ENCODE measurements at regions of chr11 and their contacts with region 1.

Region 1: GRCh38 chr11:75547580-75548058 is 14.4 kb upstream of the SERPINH1 start:
- DNase-seq: peak in 1 of 2 donors; percentile 43
- ATAC-seq: peak; percentile 78 to 91
- H3K4me3 ChIP-seq: no peak overlapping the region
- H3K27ac ChIP-seq: no peak overlapping the region
- H3K4me1 ChIP-seq: no peaks in the 10 kb centered on the region
- H3K27me3 ChIP-seq: no peaks in the 10 kb centered on the region
- CTCF ChIP-seq: peak; percentile 75 to 87 (median 85)
- POLR2A ChIP-seq: no peak

Region 2: GRCh38 chr11:75577207-75577606 is 29.6 kb after region 1 on chr11:
- in situ Hi-C with region 1: loop called in 2 of 4 experiments (anchors 5 kb)
- intact Hi-C with region 1: loop called (anchors 1 kb)
- DNase-seq: no peak
- ATAC-seq: no peak
- H3K4me3 ChIP-seq: no peak overlapping the region
- H3K27ac ChIP-seq: no peak overlapping the region
- H3K4me1 ChIP-seq: peaks cover 10 to 12% of the 10 kb centered on the region in 2 donors
- H3K27me3 ChIP-seq: no peaks in the 10 kb centered on the region
- CTCF ChIP-seq: peak in 4 of 5 experiments; percentile 39 to 76 (median 52)
- POLR2A ChIP-seq: no peak

Region 3: DNA sequence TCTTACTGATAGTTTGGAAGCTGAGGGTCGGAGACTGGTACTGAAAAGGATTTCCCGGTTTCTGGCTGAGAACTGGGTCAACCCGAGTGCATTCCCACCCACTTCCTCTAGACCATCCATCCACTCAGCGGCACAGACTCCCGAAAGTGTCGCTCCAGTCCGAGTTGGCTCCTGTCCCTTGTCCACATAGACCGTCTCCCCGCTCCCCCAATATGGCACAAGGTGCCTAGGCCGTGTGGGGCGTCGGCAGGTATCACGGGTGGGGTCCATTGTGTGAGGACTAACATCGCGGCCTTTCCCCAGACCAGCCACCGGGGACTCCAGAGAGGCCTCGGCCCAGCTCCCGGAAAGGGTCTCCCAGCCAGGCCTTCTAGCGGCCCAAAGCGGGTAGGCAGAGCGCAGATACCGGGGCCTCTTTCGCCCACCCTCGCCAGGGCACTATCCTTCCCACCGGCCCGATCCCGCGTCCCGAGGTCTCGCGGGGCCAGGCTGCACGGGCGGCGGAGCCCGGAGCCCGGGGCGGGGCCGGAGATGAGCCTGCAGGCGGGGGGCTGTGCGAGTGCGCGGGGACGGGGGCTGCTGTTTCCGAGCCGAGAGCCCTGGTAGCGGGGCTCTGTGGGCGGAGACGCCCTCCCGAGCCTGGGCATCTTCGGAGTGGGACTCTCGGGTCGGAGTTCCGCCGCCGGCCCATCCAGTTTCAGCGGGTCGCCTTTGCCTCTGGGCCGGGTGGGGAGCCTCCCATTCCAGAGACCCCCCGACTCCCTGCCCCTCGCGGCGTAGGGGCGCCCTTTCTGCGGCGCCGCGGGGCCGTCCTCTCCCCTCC is 35.5 kb after region 1 on chr11:
- in situ Hi-C with region 1: loop called in 2 of 4 experiments (anchors 5 kb)
- intact Hi-C with region 1: no loop called
- DNase-seq: peak in 1 of 2 donors; percentile 37
- ATAC-seq: peak; percentile 56 to 80
- H3K4me3 ChIP-seq: peak overlapping the region; percentile 60 to 82 (median 75)
- H3K27ac ChIP-seq: peak overlapping the region; percentile 78 to 87 (median 84)
- H3K4me1 ChIP-seq: peaks cover 6 to 13% of the 10 kb centered on the region in 2 donors
- H3K27me3 ChIP-seq: no peaks in the 10 kb centered on the region
- CTCF ChIP-seq: peak in 3 of 5 experiments; percentile 16 to 47 (median 31)
- POLR2A ChIP-seq: peak in 1 of 2 donors; percentile 41

Region 4: GRCh38 chr11:75706260-75706729 is 158.7 kb after region 1 on chr11:
- in situ Hi-C with region 1: loop called in 1 of 4 experiments (anchors 10 kb)
- intact Hi-C with region 1: no loop called
- DNase-seq: peak; percentile 37 to 47
- ATAC-seq: peak; percentile 79 to 82
- H3K4me3 ChIP-seq: no peak overlapping the region
- H3K27ac ChIP-seq: no peak overlapping the region
- H3K4me1 ChIP-seq: no peaks in the 10 kb centered on the region
- H3K27me3 ChIP-seq: no peaks in the 10 kb centered on the region
- CTCF ChIP-seq: peak; percentile 62 to 93 (median 85)
- POLR2A ChIP-seq: no peak